ENCODE measurements at regions of chr16 and their contacts with region 1.

Region 1: DNA sequence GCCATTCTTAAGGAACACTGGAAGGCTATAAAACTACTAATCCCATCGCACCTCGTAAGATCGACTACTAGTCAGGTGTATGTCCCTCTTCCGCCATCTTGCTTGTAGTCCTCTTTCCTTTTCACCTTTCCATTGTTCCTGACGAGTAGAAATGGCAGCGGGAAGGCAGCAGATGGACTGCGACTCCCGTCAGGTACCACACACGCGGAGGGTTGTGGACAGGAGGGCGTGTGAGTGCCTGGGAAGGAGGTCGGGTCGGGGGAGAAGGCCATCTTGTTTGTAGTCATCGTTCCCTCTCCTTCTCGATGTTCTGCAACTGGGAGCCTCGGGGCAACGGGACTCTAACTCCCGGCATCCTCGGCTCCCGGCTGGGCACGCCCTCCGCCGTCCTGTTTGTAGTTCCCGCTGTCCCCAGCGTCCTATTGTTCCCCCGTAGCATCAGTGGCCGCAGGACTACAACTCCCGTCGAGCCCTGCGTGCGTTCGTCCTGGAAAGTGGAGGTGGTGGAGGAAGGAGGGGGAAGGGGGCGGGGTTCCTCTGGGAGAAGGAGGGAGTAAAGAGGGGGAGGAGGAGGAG is 324 bp upstream of the FBXL19 start:
- DNase-seq: peak; percentile 99
- H3K4me3 Mint-ChIP-seq: peak overlapping the region; percentile 100
- H3K27ac Mint-ChIP-seq: peak overlapping the region; percentile 100
- H3K4me1 Mint-ChIP-seq: peaks cover 29% of the 10 kb centered on the region
- H3K27me3 Mint-ChIP-seq: no peaks in the 10 kb centered on the region

Region 2: GRCh38 chr16:30657866-30658730 is 264.9 kb before region 1 on chr16 and contains the start of gene FBRS:
- intact Hi-C with region 1: loop called (anchors 1 kb)
- DNase-seq: peak; percentile 100
- H3K4me3 Mint-ChIP-seq: peak within 1 kb of the TSS; percentile 94
- H3K27ac Mint-ChIP-seq: peak within 1 kb of the TSS; percentile 100
- H3K4me1 Mint-ChIP-seq: peaks cover 38% of the 10 kb centered on the region
- H3K27me3 Mint-ChIP-seq: no peaks in the 10 kb centered on the region
- total RNA-seq, gene FBRS: 121 and 124 TPM in 2 replicates

Region 3: DNA sequence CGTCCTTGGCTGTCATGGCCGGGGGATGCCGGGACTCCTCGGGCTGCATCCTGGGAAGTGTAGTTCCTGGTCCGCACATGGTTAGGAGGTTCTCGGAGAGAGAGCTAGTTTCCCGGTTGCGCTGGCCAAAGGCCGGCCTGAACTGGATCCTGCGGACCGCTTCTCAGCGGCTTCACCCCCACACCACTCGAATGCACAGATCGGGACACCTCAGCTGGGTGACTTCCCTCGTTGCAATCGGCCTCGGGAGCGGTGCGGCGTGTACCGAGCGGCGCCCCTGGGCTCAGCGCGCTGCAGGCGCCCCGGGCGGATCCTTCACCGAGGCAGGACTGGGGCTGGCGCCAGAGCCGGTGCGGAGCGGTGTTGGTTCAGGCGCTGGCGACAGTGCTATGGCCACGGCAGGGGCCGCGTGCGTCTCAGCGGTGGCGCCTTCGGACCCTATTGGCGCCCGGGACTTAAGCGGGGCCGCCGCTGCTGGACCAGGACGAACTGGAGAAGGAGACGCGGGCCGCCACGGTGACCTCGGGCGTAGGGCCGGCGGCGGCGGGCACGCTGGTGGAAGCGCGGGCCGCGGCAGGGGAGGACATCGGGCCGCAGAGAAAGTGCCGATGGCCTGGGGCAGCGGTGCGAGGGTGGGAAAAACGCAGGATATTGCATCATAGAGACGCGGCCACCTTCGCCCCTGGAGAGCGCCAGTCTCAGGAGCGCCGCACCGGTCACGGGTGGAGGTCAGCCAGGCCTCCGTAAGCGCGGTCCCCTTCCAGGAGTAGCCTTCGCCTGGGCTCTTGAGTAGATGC is 147.5 kb before region 1 on chr16:
- intact Hi-C with region 1: loop called (anchors 2 kb)
- DNase-seq: peak; percentile 90
- H3K4me3 Mint-ChIP-seq: peak overlapping the region; percentile 91
- H3K27ac Mint-ChIP-seq: peak overlapping the region; percentile 95
- H3K4me1 Mint-ChIP-seq: peaks cover 22% of the 10 kb centered on the region
- H3K27me3 Mint-ChIP-seq: no peaks in the 10 kb centered on the region

Region 4: GRCh38 chr16:30853758-30854157 is 69.3 kb before region 1 on chr16:
- intact Hi-C with region 1: no loop called
- DNase-seq: no peak
- H3K4me3 Mint-ChIP-seq: no peak overlapping the region
- H3K27ac Mint-ChIP-seq: no peak overlapping the region
- H3K4me1 Mint-ChIP-seq: no peaks in the 10 kb centered on the region
- H3K27me3 Mint-ChIP-seq: no peaks in the 10 kb centered on the region

Region 5: DNA sequence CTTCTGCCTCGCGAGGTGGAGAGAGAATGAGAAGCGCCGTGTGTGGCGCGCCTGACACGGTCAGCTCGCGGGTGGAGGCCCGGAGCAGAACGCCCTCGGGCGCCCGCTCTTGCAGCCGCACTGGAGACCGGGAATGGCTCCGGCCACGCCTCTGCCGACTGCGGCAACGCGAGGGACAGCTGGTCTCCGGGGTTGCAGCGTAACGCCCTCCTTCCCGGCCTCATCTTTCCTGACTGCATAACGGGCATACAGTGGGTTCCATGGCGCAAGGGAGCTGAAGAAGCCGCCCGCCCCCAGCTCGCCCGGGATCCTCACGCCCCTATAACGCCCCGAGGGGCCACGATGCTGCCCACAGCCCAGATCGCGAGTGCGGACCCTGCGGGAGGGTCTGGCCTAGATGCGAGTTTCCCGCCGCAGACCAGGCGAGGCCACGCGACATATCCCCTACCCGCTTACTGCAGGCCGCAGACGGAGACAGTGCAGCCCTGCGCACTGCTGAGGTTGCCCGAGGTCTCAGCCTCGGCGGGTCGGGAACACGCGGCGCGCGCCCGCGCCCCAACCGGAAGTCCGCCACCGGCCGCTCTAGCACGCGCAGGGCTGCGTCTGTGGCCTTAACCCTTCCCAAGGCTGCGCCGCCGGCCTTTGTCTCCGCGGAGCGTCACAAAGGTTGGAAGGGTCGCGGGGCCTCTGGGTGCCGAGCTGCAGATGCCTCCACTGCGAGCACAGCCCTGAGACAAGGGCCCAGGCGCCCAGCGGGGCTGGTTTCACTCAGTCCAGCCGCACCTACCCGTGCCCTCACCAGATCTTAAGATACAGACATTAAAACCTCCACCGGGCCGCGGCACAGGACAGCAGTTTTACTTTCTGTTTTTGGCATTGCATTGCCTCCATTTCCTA is 48.0 kb before region 1 on chr16:
- intact Hi-C with region 1: loop called (anchors 1 kb)
- DNase-seq: peak; percentile 97
- H3K4me3 Mint-ChIP-seq: peak overlapping the region; percentile 96
- H3K27ac Mint-ChIP-seq: peak overlapping the region; percentile 86
- H3K4me1 Mint-ChIP-seq: peaks cover 24% of the 10 kb centered on the region
- H3K27me3 Mint-ChIP-seq: no peaks in the 10 kb centered on the region

Region 6: GRCh38 chr16:30957456-30958174 is 34.6 kb after region 1 on chr16 and contains the start of gene SETD1A:
- intact Hi-C with region 1: loop called (anchors 1 kb)
- DNase-seq: peak; percentile 99
- H3K4me3 Mint-ChIP-seq: peak within 1 kb of the TSS; percentile 94
- H3K27ac Mint-ChIP-seq: peak within 1 kb of the TSS; percentile 99
- H3K4me1 Mint-ChIP-seq: peaks cover 32% of the 10 kb centered on the region
- H3K27me3 Mint-ChIP-seq: no peaks in the 10 kb centered on the region
- total RNA-seq, gene SETD1A: 30.7 and 31.5 TPM in 2 replicates

Region 7: DNA sequence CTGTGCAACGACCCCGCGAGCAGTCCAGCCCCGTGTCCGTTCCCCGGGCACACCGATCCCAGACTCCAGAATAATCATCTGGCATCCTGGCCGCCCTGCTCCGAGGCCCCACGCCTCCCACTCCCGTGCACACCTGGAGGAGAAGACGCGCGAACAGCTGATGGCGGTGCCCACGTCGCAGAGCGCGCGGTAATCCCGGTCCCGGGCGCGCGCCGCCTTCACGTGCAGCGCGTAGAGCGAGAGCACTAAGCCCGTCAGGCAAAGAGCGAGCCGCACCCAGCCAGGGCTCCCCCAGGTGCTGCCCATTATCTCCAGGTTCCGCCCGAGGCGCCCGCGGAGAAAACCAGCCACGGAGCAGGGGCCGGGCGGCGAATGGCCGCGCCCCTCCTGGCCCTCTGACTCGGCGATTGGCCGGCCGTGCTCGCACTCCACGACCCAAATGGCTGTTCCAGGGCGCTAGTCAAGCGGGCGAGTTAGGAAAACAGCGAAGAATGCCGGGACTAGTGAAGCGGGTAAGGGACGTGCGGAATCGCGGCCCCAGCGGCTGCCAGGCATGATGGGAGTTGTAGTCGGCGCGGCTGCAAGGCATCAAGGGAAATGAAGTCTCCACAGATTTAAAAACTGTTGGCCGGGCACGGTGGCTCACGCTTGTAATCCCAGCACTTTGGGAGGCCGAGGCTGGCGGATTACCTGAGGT is 171.5 kb after region 1 on chr16 and contains the start of gene VKORC1:
- intact Hi-C with region 1: loop called (anchors 1 kb)
- DNase-seq: peak; percentile 96
- H3K4me3 Mint-ChIP-seq: peak within 1 kb of the TSS; percentile 95
- H3K27ac Mint-ChIP-seq: peak within 1 kb of the TSS; percentile 94
- H3K4me1 Mint-ChIP-seq: peaks cover 23% of the 10 kb centered on the region
- H3K27me3 Mint-ChIP-seq: no peaks in the 10 kb centered on the region
- total RNA-seq, gene VKORC1: 56.2 and 59.1 TPM in 2 replicates

Measured in activated CD4-positive, alpha-beta T cell treated with anti-CD3 and anti-CD28 coated beads, Interleukin-2, amount 10 ng/mL, durations not matched to agents 24 days and 14 days (primary cell).